ENCODE measurements at regions of chr2 and their contacts with region 1.

Region 1: GRCh38 chr2:74867841-74868658 is 34.1 kb downstream of the HK2 start:
- DNase-seq: peak; percentile 73 to 99
- H3K4me3 ChIP-seq: peak overlapping the region; percentile 23; the same call in 1 of the 2 replicates
- H3K27ac ChIP-seq: peak overlapping the region; percentile 92
- H3K4me1 ChIP-seq: peaks cover 61% of the 10 kb centered on the region
- H3K27me3 ChIP-seq: no peaks in the 10 kb centered on the region
- CTCF ChIP-seq: no peak

Region 2: GRCh38 chr2:74715078-74715791 is 152.8 kb before region 1 on chr2:
- CTCF ChIA-PET with region 1: interaction called, 4 read pairs
- POLR2A ChIA-PET with region 1: no interaction called
- intact Hi-C with region 1: loop called (anchors 2 kb)
- DNase-seq: peak; percentile 77 to 80
- H3K4me3 ChIP-seq: peak overlapping the region; percentile 72
- H3K27ac ChIP-seq: peak overlapping the region; percentile 43
- H3K4me1 ChIP-seq: peaks cover 50% of the 10 kb centered on the region
- H3K27me3 ChIP-seq: no peaks in the 10 kb centered on the region
- CTCF ChIP-seq: peak; percentile 97

Region 3: GRCh38 chr2:74845217-74846011 is 22.6 kb before region 1 on chr2:
- CTCF ChIA-PET with region 1: interaction called, 10 read pairs
- POLR2A ChIA-PET with region 1: interaction called, 7 read pairs
- intact Hi-C with region 1: loop called (anchors 1 kb)
- DNase-seq: peak; percentile 91 to 99
- H3K4me3 ChIP-seq: peak overlapping the region; percentile 37; the same call in 1 of the 2 replicates
- H3K27ac ChIP-seq: peak overlapping the region; percentile 98
- H3K4me1 ChIP-seq: peaks cover 94% of the 10 kb centered on the region
- H3K27me3 ChIP-seq: no peaks in the 10 kb centered on the region
- CTCF ChIP-seq: no peak

Region 4: DNA sequence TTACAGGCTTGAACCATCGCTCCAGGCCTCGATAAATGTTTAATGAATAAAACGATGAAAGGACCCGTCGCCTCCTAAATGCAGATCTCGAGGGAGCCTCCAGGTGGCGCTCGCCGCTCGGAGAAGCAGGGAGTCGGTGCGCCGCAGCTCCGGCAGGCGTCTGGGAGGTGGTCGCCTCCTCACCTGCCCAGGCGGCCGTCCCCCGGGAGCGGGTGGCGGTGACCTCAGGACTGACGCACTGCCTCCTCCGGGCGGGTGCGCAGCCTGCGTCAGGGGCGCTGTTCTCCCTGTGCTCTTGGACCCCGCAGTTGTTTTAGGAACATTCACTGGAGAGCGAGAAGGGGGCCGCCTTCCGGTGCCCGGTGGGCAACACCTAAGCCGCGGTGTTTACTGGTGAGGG is 51.8 kb after region 1 on chr2:
- CTCF ChIA-PET with region 1: interaction called, 14 read pairs
- POLR2A ChIA-PET with region 1: no interaction called
- intact Hi-C with region 1: no loop called
- DNase-seq: peak; percentile 42 to 64
- H3K4me3 ChIP-seq: peak overlapping the region; percentile 60
- H3K27ac ChIP-seq: no peak overlapping the region
- H3K4me1 ChIP-seq: peaks cover 30% of the 10 kb centered on the region
- H3K27me3 ChIP-seq: no peaks in the 10 kb centered on the region
- CTCF ChIP-seq: peak; percentile 89